GM12878 (cell line): ENCODE measurements at regions of chr12 and their contacts with region 1.

Region 1: DNA sequence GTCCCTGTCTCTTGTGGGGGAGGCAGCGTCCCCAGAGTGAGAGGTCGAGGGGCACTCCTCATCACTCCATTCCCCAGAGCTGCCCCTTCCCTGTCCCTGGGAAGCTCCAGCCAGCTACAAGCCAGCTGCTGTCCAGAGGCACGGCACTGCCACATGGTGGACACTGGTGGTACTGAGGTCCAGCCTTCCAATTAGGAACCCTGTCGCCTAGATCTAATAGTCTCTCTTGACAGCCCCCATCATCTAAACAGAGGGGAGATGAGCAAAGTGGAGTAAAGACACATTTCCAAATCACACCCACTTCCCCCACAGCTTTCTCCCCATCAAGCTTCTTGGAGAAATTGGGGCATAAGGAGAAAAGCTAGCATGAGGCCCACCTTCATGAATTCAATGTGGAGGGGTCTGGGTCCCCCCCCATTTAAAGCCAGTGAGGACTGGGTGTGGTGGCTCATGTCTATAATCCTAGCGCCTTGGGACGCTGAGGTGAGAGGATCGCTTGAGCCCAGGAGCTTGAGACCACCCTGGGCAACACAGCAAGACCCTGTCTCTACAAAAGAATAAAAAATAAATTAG is 2.1 kb upstream of the INHBE start:
- DNase-seq: no peak
- ATAC-seq: peak; percentile 68
- H3K4me3 ChIP-seq: no peak overlapping the region
- H3K27ac ChIP-seq: no peak overlapping the region
- H3K4me1 ChIP-seq: peaks cover 6% of the 10 kb centered on the region
- H3K27me3 ChIP-seq: no peaks in the 10 kb centered on the region
- CTCF ChIP-seq: peak; percentile 94 to 97 (median 96); a peak in 5 of 6 replicates
- EP300 ChIP-seq: no peak
- POLR2A ChIP-seq: no peak
- RAD21 ChIP-seq: peak; percentile 96

Region 2: DNA sequence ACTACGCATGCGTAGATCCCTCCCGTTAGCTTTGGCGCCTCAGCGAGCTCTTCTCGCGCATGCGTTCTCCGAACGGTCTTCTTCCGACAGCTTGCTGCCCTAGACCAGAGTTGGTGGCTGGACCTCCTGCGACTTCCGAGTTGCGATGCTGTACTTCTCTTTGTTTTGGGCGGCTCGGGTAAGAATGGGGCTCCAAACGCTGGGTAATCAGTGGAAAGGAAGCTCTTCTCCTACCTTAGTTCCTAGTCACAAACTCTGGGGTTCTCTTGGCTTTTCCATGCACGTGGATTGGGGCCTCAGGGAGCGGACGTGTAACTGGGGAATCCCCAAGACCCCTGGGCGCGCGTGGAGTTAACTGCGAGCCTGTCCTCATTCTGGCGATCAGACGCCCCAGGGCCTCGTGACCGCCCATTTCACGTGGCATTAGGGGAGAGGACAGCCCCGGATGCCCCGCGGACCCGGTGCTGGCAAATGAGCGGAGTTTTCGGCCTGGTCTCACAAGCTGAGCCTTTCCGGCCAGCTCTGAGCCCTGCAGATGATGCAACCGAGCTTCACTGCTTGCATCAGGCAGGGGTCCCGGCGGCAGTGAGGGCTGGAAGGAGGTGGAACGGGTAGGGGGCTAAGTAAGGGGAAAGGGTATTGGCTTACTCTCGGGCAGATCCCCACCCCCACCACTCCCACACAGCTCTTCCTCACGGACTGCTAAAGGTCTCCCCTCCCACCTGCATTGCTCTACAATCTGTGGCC is 223.2 kb before region 1 on chr12 and contains the start of gene SHMT2:
- CTCF ChIA-PET with region 1: interaction called, 19 read pairs
- POLR2A ChIA-PET with region 1: interaction called, 3 read pairs
- RAD21 ChIA-PET with region 1: interaction called, 12 read pairs
- SMC1A ChIA-PET with region 1: interaction called, 7 read pairs
- in situ Hi-C with region 1: no loop called
- intact Hi-C with region 1: no loop called
- DNase-seq: peak; percentile 93
- ATAC-seq: peak; percentile 79
- H3K4me3 ChIP-seq: peak within 1 kb of the TSS; percentile 79
- H3K27ac ChIP-seq: peak within 1 kb of the TSS; percentile 93
- H3K4me1 ChIP-seq: peaks cover 31% of the 10 kb centered on the region
- H3K27me3 ChIP-seq: peaks cover 2 to 4% of the 10 kb centered on the region in 2 experiments; a peak in 3 of 4 replicates
- CTCF ChIP-seq: no peak
- EP300 ChIP-seq: no peak
- POLR2A ChIP-seq: peak; percentile 82
- RAD21 ChIP-seq: no peak
- polyA plus RNA-seq, gene SHMT2: 57.0 to 65.6 TPM

Region 3: DNA sequence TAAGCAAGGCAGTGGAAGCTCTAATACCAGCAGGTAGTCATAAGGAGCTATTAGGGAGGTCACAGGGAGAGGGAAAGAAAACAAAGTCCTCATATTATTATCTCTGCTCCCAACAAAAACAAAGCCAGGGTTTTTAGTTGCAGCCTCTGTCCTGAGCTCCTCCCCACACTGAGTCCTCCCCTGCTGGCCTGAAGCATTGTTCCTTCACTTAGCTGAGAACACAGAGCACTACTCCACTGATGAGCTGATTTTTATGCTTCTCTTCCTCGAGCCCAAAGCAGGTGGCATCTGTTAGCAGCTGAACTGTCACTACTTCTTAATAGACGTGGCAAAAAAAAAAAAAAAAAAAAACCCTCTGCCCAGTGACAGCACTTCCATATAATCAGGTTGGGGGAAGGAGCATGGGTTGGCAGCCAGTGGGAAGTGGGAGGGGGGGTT is 191.6 kb before region 1 on chr12:
- CTCF ChIA-PET with region 1: interaction called, 210 read pairs
- POLR2A ChIA-PET with region 1: interaction called, 8 read pairs
- RAD21 ChIA-PET with region 1: interaction called, 73 read pairs
- SMC1A ChIA-PET with region 1: interaction called, 134 read pairs
- in situ Hi-C with region 1: loop called (anchors 5 kb)
- intact Hi-C with region 1: loop called (anchors 1 kb)
- DNase-seq: no peak
- ATAC-seq: no peak
- H3K4me3 ChIP-seq: no peak overlapping the region
- H3K27ac ChIP-seq: no peak overlapping the region
- H3K4me1 ChIP-seq: no peaks in the 10 kb centered on the region
- H3K27me3 ChIP-seq: no peaks in the 10 kb centered on the region
- CTCF ChIP-seq: no peak
- EP300 ChIP-seq: no peak
- POLR2A ChIP-seq: no peak
- RAD21 ChIP-seq: no peak

Region 4: GRCh38 chr12:57309420-57309819 is 143.6 kb before region 1 on chr12:
- CTCF ChIA-PET with region 1: interaction called, 540 read pairs
- POLR2A ChIA-PET with region 1: interaction called, 10 read pairs
- RAD21 ChIA-PET with region 1: interaction called, 224 read pairs
- SMC1A ChIA-PET with region 1: interaction called, 226 read pairs
- in situ Hi-C with region 1: loop called (anchors 10 kb)
- intact Hi-C with region 1: loop called (anchors 1 kb)
- DNase-seq: no peak
- ATAC-seq: no peak
- H3K4me3 ChIP-seq: no peak overlapping the region
- H3K27ac ChIP-seq: no peak overlapping the region
- H3K4me1 ChIP-seq: no peaks in the 10 kb centered on the region
- H3K27me3 ChIP-seq: no peaks in the 10 kb centered on the region
- CTCF ChIP-seq: no peak
- EP300 ChIP-seq: no peak
- POLR2A ChIP-seq: no peak
- RAD21 ChIP-seq: no peak

Region 5: GRCh38 chr12:57340104-57340503 is 112.9 kb before region 1 on chr12:
- CTCF ChIA-PET with region 1: interaction called, 13 read pairs
- POLR2A ChIA-PET with region 1: interaction called, 9 read pairs
- RAD21 ChIA-PET with region 1: interaction called, 14 read pairs
- SMC1A ChIA-PET with region 1: interaction called, 6 read pairs
- in situ Hi-C with region 1: no loop called
- intact Hi-C with region 1: no loop called
- DNase-seq: no peak
- ATAC-seq: no peak
- H3K4me3 ChIP-seq: no peak overlapping the region
- H3K27ac ChIP-seq: peak overlapping the region; percentile 14; the same call in 1 of the 2 replicates
- H3K4me1 ChIP-seq: no peaks in the 10 kb centered on the region; the same call in 1 of the 2 replicates
- H3K27me3 ChIP-seq: no peaks in the 10 kb centered on the region
- CTCF ChIP-seq: no peak
- EP300 ChIP-seq: no peak
- POLR2A ChIP-seq: no peak
- RAD21 ChIP-seq: no peak

Region 6: DNA sequence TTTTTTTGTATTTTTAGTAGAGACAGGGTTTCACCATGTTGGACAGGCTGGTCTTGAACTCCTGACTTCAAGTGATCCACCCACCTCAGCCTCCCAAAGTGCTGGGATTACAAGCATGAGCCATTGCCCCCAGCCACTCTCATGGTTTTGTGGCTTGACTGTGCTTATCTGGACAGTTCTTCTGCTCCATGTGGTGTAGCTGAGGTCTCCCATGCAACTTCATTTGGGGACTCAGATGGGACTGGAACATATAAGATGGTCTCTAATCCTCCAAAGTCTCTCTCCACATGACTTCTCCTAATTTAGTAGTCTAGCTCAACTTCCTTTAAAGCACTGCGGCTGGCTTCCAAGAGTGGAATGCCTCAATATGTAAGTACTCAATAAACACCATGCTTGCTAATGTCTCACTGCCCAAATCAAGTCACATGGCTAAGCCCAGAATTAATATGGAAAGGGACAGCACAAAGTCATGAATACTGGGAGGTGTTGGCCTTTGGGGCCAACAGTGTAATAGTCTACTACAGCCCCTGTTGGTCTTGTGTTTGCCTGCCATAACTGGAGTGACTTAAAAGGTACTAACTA is 11.1 kb before region 1 on chr12:
- CTCF ChIA-PET with region 1: interaction called, 49 read pairs
- POLR2A ChIA-PET with region 1: interaction called, 5 read pairs
- RAD21 ChIA-PET with region 1: interaction called, 5 read pairs
- SMC1A ChIA-PET with region 1: interaction called, 7 read pairs
- in situ Hi-C with region 1: no loop called
- intact Hi-C with region 1: no loop called
- DNase-seq: no peak
- ATAC-seq: no peak
- H3K4me3 ChIP-seq: no peak overlapping the region
- H3K27ac ChIP-seq: no peak overlapping the region
- H3K4me1 ChIP-seq: no peaks in the 10 kb centered on the region
- H3K27me3 ChIP-seq: no peaks in the 10 kb centered on the region
- CTCF ChIP-seq: no peak
- EP300 ChIP-seq: no peak
- POLR2A ChIP-seq: no peak
- RAD21 ChIP-seq: no peak

Region 7: DNA sequence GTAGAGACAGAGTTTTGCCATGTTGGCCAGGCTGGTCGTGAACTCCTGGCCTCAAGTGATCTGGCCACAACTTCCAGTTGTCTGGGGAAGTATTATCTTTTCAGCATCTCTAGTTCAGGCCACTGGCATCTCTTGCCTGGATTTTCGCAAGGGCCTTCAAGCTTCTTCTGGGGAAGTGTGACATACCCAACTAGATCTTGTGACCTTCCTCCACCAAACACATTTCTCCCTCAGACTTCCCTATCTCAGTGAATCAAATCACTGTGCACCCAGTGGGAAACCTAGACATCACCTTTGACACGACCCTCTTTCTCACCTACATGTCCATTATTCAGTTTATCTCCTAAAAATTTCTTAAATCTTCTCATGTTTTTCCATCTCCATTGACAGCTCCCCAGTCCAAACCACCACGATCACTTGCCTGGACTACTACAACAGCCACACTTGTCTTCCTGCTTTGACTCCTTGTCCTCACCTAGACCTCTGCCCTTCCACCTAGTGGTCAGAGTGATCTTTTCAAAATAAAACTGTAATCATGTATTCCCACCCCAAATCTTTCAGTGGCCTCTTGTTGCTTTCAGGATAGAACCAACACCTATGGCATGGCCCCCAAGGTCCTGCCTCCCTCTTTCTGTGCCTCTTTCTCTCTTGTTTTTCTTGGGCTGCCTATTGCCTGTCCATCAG is 322.7 kb after region 1 on chr12:
- CTCF ChIA-PET with region 1: no interaction called
- POLR2A ChIA-PET with region 1: no interaction called
- RAD21 ChIA-PET with region 1: no interaction called
- SMC1A ChIA-PET with region 1: no interaction called
- in situ Hi-C with region 1: no loop called
- intact Hi-C with region 1: no loop called
- DNase-seq: no peak
- ATAC-seq: no peak
- H3K4me3 ChIP-seq: no peak overlapping the region
- H3K27ac ChIP-seq: no peak overlapping the region
- H3K4me1 ChIP-seq: peaks cover 3% of the 10 kb centered on the region
- H3K27me3 ChIP-seq: no peaks in the 10 kb centered on the region
- CTCF ChIP-seq: peak in 2 of 3 experiments; percentile 12 to 19; a peak in 3 of 6 replicates
- EP300 ChIP-seq: no peak
- POLR2A ChIP-seq: no peak
- RAD21 ChIP-seq: no peak